CD4-positive, alpha-beta T cell (primary cell): ENCODE measurements at regions of chr1 and their contacts with region 1.

Region 1: DNA sequence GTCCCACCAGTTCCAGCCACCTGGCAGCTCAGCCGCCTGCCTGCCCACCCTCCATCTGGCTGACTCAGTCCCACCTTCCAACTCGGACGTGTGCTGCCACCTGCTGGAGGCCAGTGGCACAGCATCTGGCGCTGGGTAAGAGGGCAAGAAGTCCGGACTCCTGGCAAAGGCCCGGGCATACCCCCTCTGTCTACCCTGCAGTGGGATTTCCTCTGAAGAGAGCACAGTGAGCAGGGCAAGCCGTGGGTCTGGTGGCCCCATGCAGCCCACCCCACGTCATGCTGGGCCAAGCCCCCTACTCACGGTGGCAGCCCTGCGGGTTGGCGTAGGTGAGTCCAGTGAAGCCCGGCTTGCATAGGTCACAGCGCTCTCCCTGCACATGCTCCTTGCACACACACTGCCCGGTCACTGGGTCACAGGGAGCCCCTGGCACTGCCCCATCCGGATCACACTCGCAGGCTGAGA is 24.5 kb downstream of the LAMB3 start:
- DNase-seq: peak; percentile 46 to 84 (median 69)
- ATAC-seq: peak; percentile 66
- H3K4me3 ChIP-seq: no peak overlapping the region
- H3K4me3 Mint-ChIP-seq: no peak overlapping the region
- H3K27ac ChIP-seq: no peak overlapping the region
- H3K27ac Mint-ChIP-seq: no peak overlapping the region
- H3K4me1 ChIP-seq: peaks cover 9% of the 10 kb centered on the region
- H3K4me1 Mint-ChIP-seq: no peaks in the 10 kb centered on the region
- H3K27me3 ChIP-seq: no peaks in the 10 kb centered on the region
- H3K27me3 Mint-ChIP-seq: no peaks in the 10 kb centered on the region
- CTCF ChIP-seq: peak; percentile 94

Region 2: GRCh38 chr1:209565759-209566678 is 61.7 kb before region 1 on chr1:
- CTCF ChIA-PET with region 1: interaction called, 4 read pairs
- POLR2A ChIA-PET with region 1: no interaction called
- intact Hi-C with region 1: loop called in 1 of 2 experiments (anchors 2 kb)
- DNase-seq: peak; percentile 49 to 84 (median 62)
- ATAC-seq: peak; percentile 89
- H3K4me3 ChIP-seq: no peak overlapping the region
- H3K4me3 Mint-ChIP-seq: no peak overlapping the region
- H3K27ac ChIP-seq: no peak overlapping the region
- H3K27ac Mint-ChIP-seq: no peak overlapping the region
- H3K4me1 ChIP-seq: peaks cover 8% of the 10 kb centered on the region
- H3K4me1 Mint-ChIP-seq: peaks cover 12% of the 10 kb centered on the region
- H3K27me3 ChIP-seq: no peaks in the 10 kb centered on the region
- H3K27me3 Mint-ChIP-seq: peaks cover 67% of the 10 kb centered on the region
- CTCF ChIP-seq: peak; percentile 74

Region 3: GRCh38 chr1:209576798-209577197 is 51.0 kb before region 1 on chr1:
- CTCF ChIA-PET with region 1: no interaction called
- POLR2A ChIA-PET with region 1: no interaction called
- intact Hi-C with region 1: loop called in 1 of 2 experiments (anchors 2 kb)
- DNase-seq: peak; percentile 34 to 77 (median 54)
- ATAC-seq: peak; percentile 74
- H3K4me3 ChIP-seq: no peak overlapping the region
- H3K4me3 Mint-ChIP-seq: no peak overlapping the region
- H3K27ac ChIP-seq: no peak overlapping the region
- H3K27ac Mint-ChIP-seq: no peak overlapping the region
- H3K4me1 ChIP-seq: no peaks in the 10 kb centered on the region
- H3K4me1 Mint-ChIP-seq: no peaks in the 10 kb centered on the region
- H3K27me3 ChIP-seq: peaks cover 4 to 10% of the 10 kb centered on the region in 2 experiments
- H3K27me3 Mint-ChIP-seq: no peaks in the 10 kb centered on the region
- CTCF ChIP-seq: peak; percentile 94

Region 4: GRCh38 chr1:209611771-209612570 is 15.8 kb before region 1 on chr1:
- CTCF ChIA-PET with region 1: interaction called, 3 read pairs
- POLR2A ChIA-PET with region 1: no interaction called
- intact Hi-C with region 1: loop called in 1 of 2 experiments (anchors 2 kb)
- DNase-seq: peak in 2 of 14 experiments; percentile 26 to 53
- ATAC-seq: no peak
- H3K4me3 ChIP-seq: no peak overlapping the region
- H3K4me3 Mint-ChIP-seq: no peak overlapping the region
- H3K27ac ChIP-seq: no peak overlapping the region
- H3K27ac Mint-ChIP-seq: no peak overlapping the region
- H3K4me1 ChIP-seq: peaks cover 29% of the 10 kb centered on the region
- H3K4me1 Mint-ChIP-seq: no peaks in the 10 kb centered on the region
- H3K27me3 ChIP-seq: no peaks in the 10 kb centered on the region
- H3K27me3 Mint-ChIP-seq: no peaks in the 10 kb centered on the region
- CTCF ChIP-seq: no peak

Region 5: DNA sequence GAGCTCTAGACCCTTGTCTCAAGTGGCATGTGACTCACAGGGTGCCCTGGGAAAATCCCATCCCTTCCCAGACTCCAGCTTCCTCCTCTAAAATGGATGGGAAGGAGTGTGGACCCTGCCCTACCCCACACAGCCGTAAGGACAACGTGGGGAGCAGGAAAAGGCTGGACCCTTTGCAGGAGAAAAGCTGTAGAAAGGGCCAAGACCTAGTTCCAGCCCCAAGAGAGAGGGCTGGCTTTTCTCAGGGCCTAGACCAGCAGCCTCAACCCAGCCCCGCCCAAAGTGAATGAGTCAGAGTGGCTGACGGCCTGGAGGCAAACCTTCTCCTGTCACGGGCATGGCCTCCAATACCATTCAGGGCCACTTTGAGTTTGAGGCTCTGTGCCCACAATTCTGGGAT is 23.4 kb after region 1 on chr1:
- CTCF ChIA-PET with region 1: no interaction called
- POLR2A ChIA-PET with region 1: no interaction called
- intact Hi-C with region 1: no loop called
- DNase-seq: peak in 12 of 14 experiments; percentile 15 to 79 (median 44)
- ATAC-seq: peak; percentile 74
- H3K4me3 ChIP-seq: no peak overlapping the region
- H3K4me3 Mint-ChIP-seq: no peak overlapping the region
- H3K27ac ChIP-seq: no peak overlapping the region
- H3K27ac Mint-ChIP-seq: no peak overlapping the region
- H3K4me1 ChIP-seq: peaks cover 30% of the 10 kb centered on the region
- H3K4me1 Mint-ChIP-seq: peaks cover 32% of the 10 kb centered on the region
- H3K27me3 ChIP-seq: no peaks in the 10 kb centered on the region
- H3K27me3 Mint-ChIP-seq: no peaks in the 10 kb centered on the region
- CTCF ChIP-seq: no peak

Region 6: GRCh38 chr1:210049616-210050015 is 421.9 kb after region 1 on chr1:
- CTCF ChIA-PET with region 1: no interaction called
- POLR2A ChIA-PET with region 1: no interaction called
- intact Hi-C with region 1: loop called in 1 of 2 experiments (anchors 5 kb)
- DNase-seq: no peak
- ATAC-seq: no peak
- H3K4me3 ChIP-seq: no peak overlapping the region
- H3K4me3 Mint-ChIP-seq: no peak overlapping the region
- H3K27ac ChIP-seq: no peak overlapping the region
- H3K27ac Mint-ChIP-seq: no peak overlapping the region
- H3K4me1 ChIP-seq: no peaks in the 10 kb centered on the region
- H3K4me1 Mint-ChIP-seq: no peaks in the 10 kb centered on the region
- H3K27me3 ChIP-seq: no peaks in the 10 kb centered on the region
- H3K27me3 Mint-ChIP-seq: no peaks in the 10 kb centered on the region
- CTCF ChIP-seq: no peak